HCT116 (cell line): ENCODE measurements at regions of chr18 and their contacts with region 1.

Region 1: GRCh38 chr18:7980136-7980535 is 413.0 kb downstream of the PTPRM start:
- DNase-seq: peak; percentile 8
- ATAC-seq: peak; percentile 64
- H3K4me3 ChIP-seq: no peak overlapping the region
- H3K27ac ChIP-seq: no peak overlapping the region
- H3K4me1 ChIP-seq: no peaks in the 10 kb centered on the region
- H3K27me3 ChIP-seq: no peaks in the 10 kb centered on the region
- CTCF ChIP-seq: peak; percentile 31 to 61 (median 53); a peak in 5 of 6 replicates
- POLR2A ChIP-seq: no peak
- RAD21 ChIP-seq: peak; percentile 53

Region 2: GRCh38 chr18:6591491-6591890 is 1388.6 kb before region 1 on chr18:
- CTCF ChIA-PET with region 1: no interaction called
- POLR2A ChIA-PET with region 1: no interaction called
- RAD21 ChIA-PET with region 1: no interaction called
- intact Hi-C with region 1: no loop called
- DNase-seq: no peak
- ATAC-seq: no peak
- H3K4me3 ChIP-seq: no peak overlapping the region
- H3K27ac ChIP-seq: no peak overlapping the region
- H3K4me1 ChIP-seq: no peaks in the 10 kb centered on the region
- H3K27me3 ChIP-seq: no peaks in the 10 kb centered on the region
- CTCF ChIP-seq: no peak
- POLR2A ChIP-seq: no peak
- RAD21 ChIP-seq: no peak

Region 3: GRCh38 chr18:6757931-6758330 is 1222.2 kb before region 1 on chr18:
- CTCF ChIA-PET with region 1: no interaction called
- POLR2A ChIA-PET with region 1: no interaction called
- RAD21 ChIA-PET with region 1: no interaction called
- intact Hi-C with region 1: no loop called
- DNase-seq: no peak
- ATAC-seq: no peak
- H3K4me3 ChIP-seq: no peak overlapping the region
- H3K27ac ChIP-seq: no peak overlapping the region
- H3K4me1 ChIP-seq: no peaks in the 10 kb centered on the region
- H3K27me3 ChIP-seq: no peaks in the 10 kb centered on the region
- CTCF ChIP-seq: no peak
- POLR2A ChIP-seq: no peak
- RAD21 ChIP-seq: no peak

Region 4: DNA sequence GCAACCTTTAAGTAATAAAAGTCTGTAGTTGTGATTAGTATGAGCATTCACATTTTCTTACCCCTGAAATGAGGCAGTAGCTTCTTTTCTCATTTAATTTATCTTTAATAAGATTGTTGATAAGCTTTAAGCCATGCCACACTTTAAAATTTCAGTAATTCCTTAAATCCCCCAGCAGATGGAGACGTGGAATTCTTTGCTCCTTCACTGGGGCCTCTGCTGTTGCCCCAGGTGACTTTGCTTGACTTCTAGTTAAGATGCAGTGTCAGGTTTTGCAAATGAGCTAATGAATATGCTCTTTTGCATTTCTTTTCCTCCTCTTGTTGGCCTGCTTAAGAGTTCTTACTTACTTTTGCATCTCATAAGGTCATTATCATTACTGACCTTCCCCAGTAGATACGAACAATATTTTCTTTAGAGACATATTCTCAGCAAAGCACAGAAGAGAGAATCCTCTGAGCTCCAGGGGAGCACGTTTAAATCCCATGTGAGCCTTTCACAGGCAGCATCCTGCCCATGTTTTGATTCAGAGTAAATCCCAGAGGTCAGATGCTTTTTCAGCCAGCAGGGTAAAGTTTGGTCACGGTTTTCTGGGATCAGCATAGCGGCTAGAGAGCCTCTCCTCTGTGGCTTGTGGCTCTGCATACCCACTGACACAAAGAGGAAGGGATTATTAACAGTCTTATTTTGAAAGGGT is 190.1 kb before region 1 on chr18:
- CTCF ChIA-PET with region 1: interaction called, 7 read pairs
- POLR2A ChIA-PET with region 1: no interaction called
- RAD21 ChIA-PET with region 1: interaction called in 1 of 2 experiments, 3 read pairs
- intact Hi-C with region 1: loop called (anchors 1 kb)
- DNase-seq: peak; percentile 29
- ATAC-seq: peak; percentile 89
- H3K4me3 ChIP-seq: no peak overlapping the region
- H3K27ac ChIP-seq: no peak overlapping the region
- H3K4me1 ChIP-seq: no peaks in the 10 kb centered on the region
- H3K27me3 ChIP-seq: no peaks in the 10 kb centered on the region
- CTCF ChIP-seq: peak; percentile 35 to 60 (median 56); a peak in 4 of 6 replicates
- POLR2A ChIP-seq: no peak
- RAD21 ChIP-seq: peak; percentile 71

Region 5: DNA sequence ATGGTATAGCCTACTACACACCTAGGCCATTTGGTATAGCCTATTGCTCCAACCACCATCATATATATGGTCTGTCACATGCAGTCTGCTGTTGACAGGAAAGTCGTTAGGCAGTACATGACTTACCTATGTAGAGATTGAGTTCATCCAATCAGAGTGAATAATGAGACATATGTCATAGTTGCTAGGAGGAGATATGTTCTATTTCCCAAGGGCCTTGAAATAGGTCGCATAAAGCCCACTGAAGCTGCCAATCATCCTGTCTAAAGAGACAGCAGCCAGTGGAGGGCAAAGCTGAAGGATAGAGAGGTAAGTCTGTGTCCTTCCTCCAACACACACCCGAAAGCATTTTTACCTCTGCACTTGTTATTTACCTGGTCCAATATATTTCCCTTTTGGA is 149.7 kb before region 1 on chr18:
- CTCF ChIA-PET with region 1: no interaction called
- POLR2A ChIA-PET with region 1: no interaction called
- RAD21 ChIA-PET with region 1: no interaction called
- intact Hi-C with region 1: no loop called
- DNase-seq: peak; percentile 75
- ATAC-seq: peak; percentile 98
- H3K4me3 ChIP-seq: no peak overlapping the region
- H3K27ac ChIP-seq: no peak overlapping the region
- H3K4me1 ChIP-seq: no peaks in the 10 kb centered on the region
- H3K27me3 ChIP-seq: no peaks in the 10 kb centered on the region
- CTCF ChIP-seq: no peak
- POLR2A ChIP-seq: no peak
- RAD21 ChIP-seq: no peak